ENCODE measurements at regions of chrX and their contacts with region 1.

Region 1: GRCh38 chrX:134753718-134754008 is 95.4 kb upstream of the PLAC1 start:
- DNase-seq: no peak
- H3K4me3 ChIP-seq: peak overlapping the region; percentile 30
- CTCF ChIP-seq: peak; percentile 27

Region 2: DNA sequence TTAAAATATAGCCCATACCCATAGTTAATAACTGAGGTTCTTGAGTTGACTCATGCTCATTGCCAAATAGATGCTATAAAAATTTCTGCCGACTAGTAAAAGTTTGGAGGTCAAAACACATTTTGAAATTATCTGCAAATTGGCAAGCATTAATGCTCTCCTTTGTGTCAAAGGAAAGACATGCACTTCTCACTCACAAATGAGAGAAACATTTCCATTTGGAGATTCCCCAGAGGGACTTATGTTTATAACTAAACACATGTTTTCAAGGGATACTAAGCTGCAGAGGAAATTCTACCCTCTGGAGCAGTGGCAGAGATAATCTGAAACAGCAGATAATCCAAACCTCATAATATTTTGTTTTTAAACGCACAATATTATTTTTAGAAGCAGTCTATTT is 562.4 kb before region 1 on chrX:
- CTCF ChIA-PET with region 1: no interaction called
- POLR2A ChIA-PET with region 1: no interaction called
- DNase-seq: no peak
- H3K4me3 ChIP-seq: no peak overlapping the region
- CTCF ChIP-seq: no peak

Region 3: DNA sequence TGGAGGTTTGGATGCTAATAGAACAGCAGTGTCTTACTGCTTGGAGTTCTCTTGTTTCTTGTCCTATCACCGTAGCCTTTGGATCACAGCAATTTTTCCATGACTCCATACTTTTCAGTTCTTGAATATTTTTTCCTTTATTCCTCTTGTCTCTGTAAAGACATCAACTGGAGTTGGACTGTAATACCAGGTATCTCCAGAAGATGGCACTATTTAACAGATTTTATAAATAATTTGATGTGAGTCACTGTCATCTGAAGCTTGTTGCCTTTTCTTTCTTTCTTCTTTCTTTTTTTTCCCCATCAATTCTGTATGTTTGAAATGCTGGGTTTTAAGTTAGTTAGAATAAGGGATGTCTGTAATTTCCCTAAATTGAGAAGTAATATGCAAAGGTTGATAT is 269.6 kb before region 1 on chrX:
- CTCF ChIA-PET with region 1: interaction called, 15 read pairs
- POLR2A ChIA-PET with region 1: no interaction called
- DNase-seq: peak; percentile 23
- H3K4me3 ChIP-seq: no peak overlapping the region
- CTCF ChIP-seq: peak; percentile 4

Region 4: GRCh38 chrX:134520860-134521390 is 232.7 kb before region 1 on chrX:
- CTCF ChIA-PET with region 1: interaction called, 29 read pairs
- POLR2A ChIA-PET with region 1: no interaction called
- DNase-seq: no peak
- H3K4me3 ChIP-seq: no peak overlapping the region
- CTCF ChIP-seq: peak; percentile 58

Region 5: GRCh38 chrX:134764212-134764785 is 10.6 kb after region 1 on chrX:
- CTCF ChIA-PET with region 1: interaction called, 19 read pairs
- POLR2A ChIA-PET with region 1: no interaction called
- DNase-seq: no peak
- H3K4me3 ChIP-seq: no peak overlapping the region
- CTCF ChIP-seq: peak; percentile 10

Measured in AG04449 (cell line).